Transverse colon (tissue), 4 donors: ENCODE measurements at regions of chr10 and their contacts with region 1.

Region 1: GRCh38 chr10:77301305-77301730 is 336.3 kb downstream of the KCNMA1 start:
- DNase-seq: no peak
- H3K4me3 ChIP-seq: no peak overlapping the region
- H3K27ac ChIP-seq: no peak overlapping the region
- H3K4me1 ChIP-seq: no peaks in the 10 kb centered on the region
- H3K27me3 ChIP-seq: no peaks in the 10 kb centered on the region
- CTCF ChIP-seq: no peak
- EP300 ChIP-seq: no peak
- POLR2A ChIP-seq: no peak

Region 2: GRCh38 chr10:76210211-76210610 is 1091.1 kb before region 1 on chr10:
- in situ Hi-C with region 1: no loop called
- intact Hi-C with region 1: loop called (anchors 5 kb)
- DNase-seq: no peak
- H3K4me3 ChIP-seq: no peak overlapping the region
- H3K27ac ChIP-seq: no peak overlapping the region
- H3K4me1 ChIP-seq: no peaks in the 10 kb centered on the region
- H3K27me3 ChIP-seq: no peaks in the 10 kb centered on the region
- CTCF ChIP-seq: no peak
- EP300 ChIP-seq: no peak
- POLR2A ChIP-seq: no peak

Region 3: DNA sequence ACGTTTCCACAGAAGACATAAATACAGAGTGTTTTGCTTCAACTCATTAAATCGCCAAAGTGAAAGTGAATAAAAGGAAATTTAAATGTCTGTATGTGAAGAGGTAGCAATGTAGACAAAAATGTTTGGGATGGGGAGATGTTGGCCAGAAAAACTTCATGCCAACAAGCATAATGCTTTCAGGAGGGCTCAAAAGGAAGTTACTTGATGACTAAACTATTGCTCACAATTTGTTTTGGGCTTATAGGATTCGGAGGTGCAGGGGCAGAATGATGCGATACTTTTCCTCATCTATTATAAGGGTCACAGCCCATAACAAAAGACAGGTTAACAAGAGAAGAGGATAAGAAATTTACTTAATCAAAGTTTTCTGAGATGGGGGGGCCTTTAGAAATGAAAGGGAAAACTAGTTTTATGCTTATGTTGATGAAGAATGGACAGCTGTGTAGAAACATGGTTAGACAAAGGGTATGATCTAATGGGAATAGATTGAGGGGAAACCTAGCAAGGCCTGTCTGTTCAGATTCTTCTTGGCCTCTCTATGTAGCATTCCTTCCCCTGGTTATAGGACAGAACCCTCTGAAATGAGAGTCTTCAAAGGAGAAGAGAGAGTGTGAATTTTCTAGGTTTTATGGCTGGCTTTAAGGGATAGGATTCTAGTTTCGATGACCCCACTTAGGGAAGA is 971.3 kb before region 1 on chr10:
- in situ Hi-C with region 1: no loop called
- intact Hi-C with region 1: no loop called
- DNase-seq: no peak
- H3K4me3 ChIP-seq: no peak overlapping the region
- H3K27ac ChIP-seq: no peak overlapping the region
- H3K4me1 ChIP-seq: peaks cover 0 to 6% (median 2%) of the 10 kb centered on the region in 4 donors
- H3K27me3 ChIP-seq: no peaks in the 10 kb centered on the region
- CTCF ChIP-seq: no peak
- EP300 ChIP-seq: no peak
- POLR2A ChIP-seq: no peak